Upper lobe of right lung (tissue), 1 donor: ENCODE measurements at regions of chr20 and their contacts with region 1.

Region 1: DNA sequence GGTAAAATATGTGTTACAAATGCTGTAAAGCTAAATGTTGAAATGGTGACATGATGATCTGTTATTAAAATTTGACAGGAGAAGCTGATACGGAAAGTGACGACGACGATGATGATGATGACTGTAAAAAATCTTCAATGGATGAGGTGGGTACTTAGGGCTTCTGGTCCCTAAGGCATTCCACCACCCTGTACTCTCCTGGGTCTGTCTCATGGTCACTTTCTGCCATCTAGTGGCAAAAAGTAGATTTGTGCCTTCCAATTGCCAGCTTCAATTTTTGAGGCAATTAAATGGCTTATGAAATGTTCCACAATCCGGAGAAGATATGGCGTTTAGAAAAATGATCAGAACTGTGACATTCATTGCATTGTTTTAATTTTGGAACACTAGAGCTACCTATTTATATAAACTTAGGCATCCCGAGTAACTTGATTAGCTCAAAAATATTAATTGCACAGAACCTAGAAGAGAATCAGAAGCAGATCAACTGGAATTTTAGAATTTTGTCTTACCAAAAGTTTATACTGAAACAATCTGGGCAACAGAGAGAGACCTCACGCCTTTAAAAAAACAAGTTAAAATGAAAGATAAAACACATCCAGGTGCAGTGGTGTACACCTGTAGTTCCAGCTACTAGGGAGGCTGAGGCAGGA is 346.5 kb upstream of the PLCB4 start:
- DNase-seq: no peak
- ATAC-seq: peak; percentile 87
- H3K4me3 ChIP-seq: no peak overlapping the region
- H3K27ac ChIP-seq: no peak overlapping the region
- H3K4me1 ChIP-seq: no peaks in the 10 kb centered on the region
- H3K27me3 ChIP-seq: no peaks in the 10 kb centered on the region
- CTCF ChIP-seq: peak; percentile 80

Region 2: DNA sequence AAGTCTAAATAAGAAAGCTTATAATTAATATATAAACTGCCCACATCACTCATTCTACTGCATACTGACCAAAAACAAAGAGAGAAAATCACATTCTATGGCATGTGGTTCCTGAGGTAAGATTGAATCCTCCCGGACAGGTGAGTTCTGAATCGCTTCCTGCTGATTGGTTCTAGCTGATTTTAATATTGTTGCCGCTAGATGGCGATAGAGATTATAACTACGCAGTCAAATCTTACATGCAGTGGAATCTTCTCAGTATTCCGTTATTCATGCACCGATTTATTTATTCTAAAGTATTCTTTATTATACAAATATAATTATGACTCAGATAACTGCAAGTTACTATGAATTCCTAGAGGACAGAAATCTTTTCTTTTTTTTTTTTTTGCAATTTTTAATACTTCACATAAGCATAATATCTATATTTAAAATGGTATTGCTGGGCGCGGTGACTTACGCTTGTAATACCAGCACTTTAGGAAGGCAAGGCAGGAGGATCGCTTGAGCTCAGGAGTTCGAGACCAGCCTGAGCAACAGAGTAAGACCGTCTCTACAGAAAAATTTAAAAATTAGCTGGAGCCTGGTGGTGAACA is 678.6 kb before region 1 on chr20:
- intact Hi-C with region 1: loop called (anchors 10 kb)
- DNase-seq: no peak
- ATAC-seq: peak; percentile 84
- H3K4me3 ChIP-seq: no peak overlapping the region
- H3K27ac ChIP-seq: no peak overlapping the region
- H3K4me1 ChIP-seq: no peaks in the 10 kb centered on the region
- H3K27me3 ChIP-seq: no peaks in the 10 kb centered on the region
- CTCF ChIP-seq: peak; percentile 77

Region 3: DNA sequence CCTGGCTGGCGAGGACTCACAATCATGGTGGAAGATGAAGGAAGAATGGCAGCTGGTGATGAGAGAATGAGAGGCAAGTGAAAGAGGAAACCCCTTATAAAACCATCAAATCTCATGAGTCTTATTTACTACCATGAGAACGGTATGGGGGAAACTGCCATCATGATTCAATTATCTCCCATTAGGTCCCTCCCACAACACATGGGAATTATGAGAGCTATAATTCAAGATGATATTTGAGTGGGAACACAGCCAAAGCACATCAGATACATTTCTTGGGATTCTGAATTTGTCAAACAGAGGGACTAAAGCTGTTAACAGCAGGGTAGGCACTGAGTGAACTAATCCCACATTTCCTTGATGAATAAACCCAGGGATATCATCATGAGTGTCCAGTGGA is 230.3 kb after region 1 on chr20:
- intact Hi-C with region 1: no loop called
- DNase-seq: no peak
- ATAC-seq: no peak
- H3K4me3 ChIP-seq: no peak overlapping the region
- H3K27ac ChIP-seq: no peak overlapping the region
- H3K4me1 ChIP-seq: no peaks in the 10 kb centered on the region
- H3K27me3 ChIP-seq: no peaks in the 10 kb centered on the region
- CTCF ChIP-seq: no peak